MCF 10A (cell line): ENCODE measurements at regions of chr9 and their contacts with region 1.

Region 1: DNA sequence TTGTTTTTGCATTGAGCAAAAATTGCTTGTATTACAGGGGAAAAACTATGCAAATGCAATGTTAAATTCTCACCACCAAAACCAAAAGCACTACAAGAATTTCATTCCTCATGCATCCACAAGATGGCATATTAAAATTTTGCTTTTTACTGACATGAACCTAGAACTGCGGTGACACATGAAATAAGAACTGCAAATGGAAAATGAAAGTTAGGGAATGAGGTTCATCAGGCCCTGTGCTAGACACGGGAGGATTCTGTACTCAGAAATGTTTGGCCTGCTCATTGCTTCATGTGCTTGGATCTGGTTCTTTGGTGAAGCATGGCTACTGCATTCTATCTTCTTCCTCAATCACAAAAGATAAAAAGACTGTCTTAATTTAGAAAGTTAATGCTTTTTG is 9.1 kb upstream of the RFK start:
- DNase-seq: peak; percentile 74
- H3K4me3 Mint-ChIP-seq: peak overlapping the region; percentile 55
- H3K27ac Mint-ChIP-seq: peak overlapping the region; percentile 90
- H3K4me1 Mint-ChIP-seq: no peaks in the 10 kb centered on the region
- H3K27me3 Mint-ChIP-seq: no peaks in the 10 kb centered on the region
- CTCF ChIP-seq: peak; percentile 33

Region 2: DNA sequence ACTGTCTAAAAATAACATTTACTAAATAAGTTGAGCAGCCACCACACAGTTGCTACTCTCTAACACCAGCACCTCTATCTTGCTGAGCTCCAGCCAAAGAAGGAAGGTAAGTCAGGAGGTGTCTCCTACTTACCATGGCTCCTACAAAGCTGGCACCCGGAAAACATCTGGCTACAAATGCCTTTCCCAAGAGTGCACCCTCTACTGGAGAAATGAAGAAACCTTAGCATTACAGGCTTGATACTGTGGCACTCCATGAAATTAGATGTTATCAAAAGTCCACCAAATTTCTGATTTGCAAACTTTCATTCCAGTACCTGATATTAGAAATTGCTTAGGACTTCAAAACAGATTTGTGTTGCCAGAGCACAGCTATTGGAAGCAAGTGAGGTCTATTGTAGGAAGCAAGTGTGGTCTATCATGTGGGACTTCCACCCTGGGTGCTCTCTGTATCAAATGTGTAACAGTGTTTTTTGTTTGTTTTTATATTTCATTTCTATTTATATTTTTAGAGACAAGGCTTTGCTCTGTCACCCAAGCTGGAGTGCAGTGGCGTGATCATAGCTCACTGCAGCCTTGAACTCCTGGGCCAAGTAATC is 16.5 kb after region 1 on chr9:
- CTCF ChIA-PET with region 1: interaction called, 10 read pairs
- POLR2A ChIA-PET with region 1: interaction called, 3 read pairs
- intact Hi-C with region 1: no loop called
- DNase-seq: peak; percentile 59
- H3K4me3 Mint-ChIP-seq: no peak overlapping the region
- H3K27ac Mint-ChIP-seq: no peak overlapping the region
- H3K4me1 Mint-ChIP-seq: peaks cover 10% of the 10 kb centered on the region
- H3K27me3 Mint-ChIP-seq: no peaks in the 10 kb centered on the region
- CTCF ChIP-seq: peak; percentile 46

Region 3: DNA sequence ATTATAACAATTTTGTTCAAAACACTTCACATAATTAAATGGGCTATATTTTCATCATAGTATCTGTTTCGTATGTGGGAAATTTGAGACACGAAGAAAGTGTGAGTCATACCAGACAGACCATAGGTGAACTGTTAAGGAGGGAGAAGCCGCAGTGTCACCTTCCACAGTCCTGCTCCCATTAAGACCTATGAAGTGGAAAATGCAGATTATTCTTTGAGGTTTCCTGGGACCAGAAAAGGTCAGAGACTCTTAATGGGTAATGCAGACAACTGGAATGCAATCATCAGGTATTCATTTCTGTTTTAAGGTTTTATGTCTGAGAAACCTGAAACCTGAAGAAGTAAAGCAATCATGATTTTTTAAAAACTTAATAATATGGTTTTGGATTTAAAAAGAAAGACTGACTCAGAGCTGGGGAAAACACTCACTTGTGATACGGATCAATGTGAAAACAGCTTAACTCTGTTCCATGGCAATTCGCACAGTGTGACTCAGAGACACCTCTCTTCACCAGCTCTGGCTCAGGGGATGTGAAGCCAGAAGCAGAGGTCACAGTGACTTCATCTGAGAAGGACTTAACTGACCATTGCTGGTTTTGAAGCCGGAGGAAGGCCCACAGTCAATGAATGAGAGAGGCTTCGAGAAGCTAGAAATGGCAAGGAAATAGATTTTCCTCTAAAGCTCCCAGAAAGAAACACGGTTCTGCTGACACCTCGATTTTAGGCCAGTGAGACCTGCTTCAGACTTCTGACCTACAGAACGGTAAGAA is 38.4 kb after region 1 on chr9:
- CTCF ChIA-PET with region 1: no interaction called
- POLR2A ChIA-PET with region 1: no interaction called
- intact Hi-C with region 1: loop called (anchors 5 kb)
- DNase-seq: peak; percentile 24
- H3K4me3 Mint-ChIP-seq: no peak overlapping the region
- H3K27ac Mint-ChIP-seq: no peak overlapping the region
- H3K4me1 Mint-ChIP-seq: no peaks in the 10 kb centered on the region
- H3K27me3 Mint-ChIP-seq: no peaks in the 10 kb centered on the region
- CTCF ChIP-seq: no peak

Region 4: GRCh38 chr9:76475686-76476085 is 72.3 kb after region 1 on chr9:
- CTCF ChIA-PET with region 1: no interaction called
- POLR2A ChIA-PET with region 1: no interaction called
- intact Hi-C with region 1: no loop called
- DNase-seq: no peak
- H3K4me3 Mint-ChIP-seq: no peak overlapping the region
- H3K27ac Mint-ChIP-seq: no peak overlapping the region
- H3K4me1 Mint-ChIP-seq: no peaks in the 10 kb centered on the region
- H3K27me3 Mint-ChIP-seq: no peaks in the 10 kb centered on the region
- CTCF ChIP-seq: no peak